Activated CD4-positive, alpha-beta T cell treated with anti-CD3 and anti-CD28 coated beads, Interleukin-2, amount 10 ng/mL, durations not matched to agents 7 days and 5 days (primary cell): ENCODE measurements at regions of chr9 and their contacts with region 1.

Region 1: DNA sequence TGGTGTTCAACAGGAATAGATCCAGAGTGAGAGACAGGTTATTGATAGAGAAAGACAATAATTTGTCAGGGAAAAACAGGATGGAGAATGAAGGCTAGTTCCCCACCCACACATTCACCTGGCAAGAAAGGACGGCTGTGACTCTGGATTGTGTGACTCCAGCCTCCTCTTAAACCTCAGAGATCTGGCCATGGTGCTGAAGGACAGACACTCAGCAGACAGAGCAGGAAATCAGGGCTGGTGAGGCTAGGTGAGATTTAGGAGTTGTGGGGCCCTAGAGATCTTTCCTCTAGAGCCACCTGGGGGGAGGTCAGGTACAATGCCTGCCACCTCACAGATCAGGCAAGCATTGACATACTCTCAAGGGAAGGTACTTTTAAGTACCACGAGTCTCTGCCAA is 15.2 kb downstream of the OR1B1 start:
- DNase-seq: no peak
- H3K4me3 Mint-ChIP-seq: no peak overlapping the region
- H3K27ac Mint-ChIP-seq: no peak overlapping the region
- H3K4me1 Mint-ChIP-seq: no peaks in the 10 kb centered on the region
- H3K27me3 Mint-ChIP-seq: peaks cover 2% of the 10 kb centered on the region

Region 2: GRCh38 chr9:123472862-123473614 is 830.8 kb after region 1 on chr9:
- CTCF ChIA-PET with region 1: interaction called, 11 read pairs
- POLR2A ChIA-PET with region 1: no interaction called
- DNase-seq: no peak
- H3K4me3 Mint-ChIP-seq: no peak overlapping the region
- H3K27ac Mint-ChIP-seq: no peak overlapping the region
- H3K4me1 Mint-ChIP-seq: no peaks in the 10 kb centered on the region
- H3K27me3 Mint-ChIP-seq: no peaks in the 10 kb centered on the region